Activated CD4-positive, alpha-beta T cell treated with anti-CD3 and anti-CD28 coated beads for 36 hours (primary cell): ENCODE measurements at regions of chr1 and their contacts with region 1.

Region 1: DNA sequence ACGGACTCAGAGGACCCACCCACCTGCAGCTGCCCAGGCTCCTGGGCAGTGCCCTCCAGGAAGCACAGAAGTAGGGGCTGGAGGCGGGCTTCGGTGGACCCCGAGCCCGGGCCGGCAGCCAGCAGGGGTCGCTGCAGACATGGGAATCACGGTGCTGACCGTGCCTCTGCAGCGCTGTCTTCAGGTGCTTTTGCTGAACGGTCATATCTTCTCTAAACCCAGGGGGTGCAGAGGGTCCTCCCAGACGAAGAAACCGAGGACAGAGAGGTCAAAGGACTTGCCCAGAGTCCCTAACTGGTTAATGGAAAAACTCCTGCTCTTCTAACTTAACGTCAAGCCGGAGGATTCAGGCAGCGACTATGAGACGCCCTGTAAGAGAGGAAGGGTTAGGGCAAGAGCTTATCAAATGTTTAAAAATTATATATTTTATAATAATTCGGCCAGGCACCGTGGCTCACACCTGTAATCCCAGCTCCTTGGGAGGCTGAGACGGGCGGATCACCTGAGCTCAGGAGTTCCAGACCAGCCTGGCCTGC is 21.5 kb upstream of the LEFTY2 start:
- DNase-seq: peak; percentile 84
- ATAC-seq: peak; percentile 86
- H3K4me3 Mint-ChIP-seq: no peak overlapping the region
- H3K27ac Mint-ChIP-seq: no peak overlapping the region
- H3K4me1 Mint-ChIP-seq: peaks cover 2% of the 10 kb centered on the region
- H3K27me3 Mint-ChIP-seq: peaks cover 2% of the 10 kb centered on the region

Region 2: DNA sequence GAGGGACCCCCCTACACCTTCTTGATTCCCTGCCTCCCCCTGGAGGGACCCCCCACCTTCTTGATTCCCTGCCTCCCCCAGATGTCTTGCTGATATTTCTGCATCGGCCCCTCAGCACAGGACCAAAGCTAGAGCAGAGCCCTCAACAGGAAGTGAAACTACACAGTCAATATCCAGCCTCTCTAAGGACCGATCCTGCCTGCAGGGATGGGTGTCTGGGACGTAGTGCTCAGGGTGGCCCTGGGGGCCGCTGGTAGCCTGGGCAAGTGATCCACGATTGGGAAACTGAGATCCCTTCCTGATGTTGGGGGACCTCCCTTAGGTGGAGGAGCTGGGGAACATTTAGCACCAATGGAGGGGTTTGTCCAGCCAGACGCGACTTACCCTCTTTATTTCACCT is 17.6 kb before region 1 on chr1:
- CTCF ChIA-PET with region 1: interaction called, 21 read pairs
- POLR2A ChIA-PET with region 1: no interaction called
- intact Hi-C with region 1: no loop called
- DNase-seq: no peak
- ATAC-seq: peak; percentile 75
- H3K4me3 Mint-ChIP-seq: no peak overlapping the region
- H3K27ac Mint-ChIP-seq: no peak overlapping the region
- H3K4me1 Mint-ChIP-seq: peaks cover 9% of the 10 kb centered on the region
- H3K27me3 Mint-ChIP-seq: peaks cover 3% of the 10 kb centered on the region

Region 3: DNA sequence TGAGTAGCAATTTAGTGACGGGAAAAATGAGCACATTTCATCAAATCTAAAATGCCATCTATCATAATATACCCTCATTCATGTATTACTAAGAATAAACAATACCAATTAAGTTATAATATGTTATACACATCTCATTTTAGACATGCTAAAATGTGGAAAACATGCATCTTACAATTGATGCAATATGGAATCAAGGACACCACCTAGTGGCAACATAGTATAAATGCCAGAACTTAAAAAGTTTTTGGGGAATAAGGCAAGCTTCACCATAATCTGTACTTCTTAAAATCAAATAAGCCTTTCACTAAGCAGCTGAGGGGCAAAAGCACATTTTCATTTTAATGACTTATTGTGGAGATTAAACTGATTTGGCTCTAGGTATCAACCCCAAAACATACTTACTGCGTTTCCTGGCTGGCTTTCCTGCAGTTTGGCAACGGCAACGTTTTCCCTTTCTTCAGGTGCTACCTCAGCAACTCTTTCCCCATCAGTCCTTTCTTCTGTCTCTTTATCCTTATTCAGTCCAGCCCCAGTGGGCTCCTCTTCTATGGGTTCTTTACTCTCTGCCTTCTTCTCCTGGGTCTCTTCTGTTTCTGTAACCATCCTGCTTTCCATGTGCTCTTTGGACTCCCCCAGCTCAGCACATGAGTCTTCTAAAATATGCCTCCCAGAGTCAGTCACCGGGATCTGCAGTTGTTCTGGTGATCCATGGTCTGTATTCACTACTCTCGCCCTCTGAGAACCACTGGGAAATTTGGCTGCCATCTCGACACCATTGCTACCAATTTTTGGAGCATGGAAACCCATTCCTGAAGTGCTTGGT is 25.2 kb after region 1 on chr1:
- CTCF ChIA-PET with region 1: interaction called, 15 read pairs
- POLR2A ChIA-PET with region 1: no interaction called
- intact Hi-C with region 1: no loop called
- DNase-seq: no peak
- ATAC-seq: no peak
- H3K4me3 Mint-ChIP-seq: no peak overlapping the region
- H3K27ac Mint-ChIP-seq: no peak overlapping the region
- H3K4me1 Mint-ChIP-seq: peaks cover 20% of the 10 kb centered on the region
- H3K27me3 Mint-ChIP-seq: no peaks in the 10 kb centered on the region